T47D (cell line): ENCODE measurements at regions of chr6 and their contacts with region 1.

Region 1: DNA sequence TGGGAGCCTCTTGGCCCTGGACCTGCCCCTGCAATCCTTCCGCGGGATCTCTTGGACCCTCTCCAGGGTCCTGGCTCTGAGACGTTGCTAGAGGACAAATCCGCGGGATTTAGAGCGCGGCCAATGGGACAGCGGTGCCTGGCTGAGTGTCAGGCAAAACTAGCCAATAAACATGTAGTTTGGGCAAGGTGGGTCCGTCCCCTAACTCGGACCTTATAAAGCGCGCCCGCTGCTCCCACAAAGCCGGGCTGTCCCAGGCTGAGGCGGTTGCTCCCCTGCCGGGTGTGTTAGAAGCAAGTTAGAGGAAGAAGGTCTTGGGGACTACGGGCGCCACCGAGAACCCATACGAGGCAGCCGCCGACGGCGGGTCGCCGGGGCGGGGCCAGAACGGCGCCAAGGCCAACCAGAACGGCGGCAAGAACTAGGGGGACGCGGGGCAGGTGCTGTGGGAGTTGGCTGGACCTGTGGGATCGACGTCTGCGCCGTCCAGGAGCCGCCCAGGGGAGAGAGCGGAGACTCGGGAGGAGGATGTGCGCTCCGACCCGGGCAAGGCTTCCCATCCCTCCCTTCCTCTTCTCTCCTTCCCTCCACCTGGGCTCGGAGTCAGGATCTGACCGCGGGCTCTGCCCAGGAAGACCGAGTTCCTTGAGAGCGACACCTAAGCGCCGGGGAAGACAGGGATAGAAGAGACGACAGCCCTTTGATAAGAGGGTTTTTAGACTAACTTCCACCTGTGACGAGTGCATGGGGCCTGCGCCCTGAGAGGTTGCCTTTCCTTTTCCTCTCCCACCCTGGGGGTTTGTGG is 6.5 kb upstream of the TMEM14A start:
- DNase-seq: peak; percentile 97

Region 2: DNA sequence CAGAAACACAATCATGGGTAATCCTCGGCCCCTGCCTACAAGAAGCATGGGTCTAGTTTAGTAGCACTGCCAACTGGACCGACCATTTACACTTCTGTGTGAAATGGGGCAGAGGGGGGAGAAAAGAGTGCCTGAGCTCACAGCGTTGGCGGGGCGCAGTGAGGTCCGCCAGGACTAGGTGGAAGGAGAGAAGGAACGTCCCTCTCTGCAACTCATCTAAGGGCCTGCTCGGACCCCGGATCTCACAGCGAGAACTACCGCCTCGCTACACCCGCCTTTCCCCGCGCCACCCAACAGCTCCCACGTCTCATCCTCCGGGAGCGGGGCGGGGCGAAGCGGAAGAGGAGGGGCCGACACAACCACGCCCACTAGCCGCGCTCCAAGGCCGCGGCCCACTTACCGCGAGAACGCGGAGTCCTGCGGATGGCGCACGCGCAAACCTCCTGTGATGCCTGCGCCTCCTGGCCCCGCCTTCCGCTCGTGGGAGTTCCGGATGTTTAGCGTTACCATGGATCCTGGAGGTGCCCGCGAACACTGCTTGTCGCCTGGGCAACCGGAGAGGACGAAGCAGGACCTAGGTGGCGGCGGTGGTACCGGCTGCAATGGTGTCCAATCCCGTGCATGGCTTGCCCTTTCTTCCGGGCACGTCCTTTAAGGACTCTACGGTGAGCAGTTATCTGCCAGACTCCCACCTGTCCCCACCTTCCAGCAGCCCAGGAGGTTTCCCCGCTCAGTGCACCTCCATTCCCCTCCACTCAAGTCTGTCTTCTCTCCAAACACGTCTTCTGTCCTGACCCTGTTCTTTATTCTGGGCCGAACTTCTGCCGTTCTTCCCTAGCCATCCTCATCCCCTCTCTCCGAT is 244.3 kb before region 1 on chr6 and contains the start of gene EFHC1:
- in situ Hi-C with region 1: loop called (anchors 25 kb)
- DNase-seq: peak; percentile 67 to 98

Region 3: DNA sequence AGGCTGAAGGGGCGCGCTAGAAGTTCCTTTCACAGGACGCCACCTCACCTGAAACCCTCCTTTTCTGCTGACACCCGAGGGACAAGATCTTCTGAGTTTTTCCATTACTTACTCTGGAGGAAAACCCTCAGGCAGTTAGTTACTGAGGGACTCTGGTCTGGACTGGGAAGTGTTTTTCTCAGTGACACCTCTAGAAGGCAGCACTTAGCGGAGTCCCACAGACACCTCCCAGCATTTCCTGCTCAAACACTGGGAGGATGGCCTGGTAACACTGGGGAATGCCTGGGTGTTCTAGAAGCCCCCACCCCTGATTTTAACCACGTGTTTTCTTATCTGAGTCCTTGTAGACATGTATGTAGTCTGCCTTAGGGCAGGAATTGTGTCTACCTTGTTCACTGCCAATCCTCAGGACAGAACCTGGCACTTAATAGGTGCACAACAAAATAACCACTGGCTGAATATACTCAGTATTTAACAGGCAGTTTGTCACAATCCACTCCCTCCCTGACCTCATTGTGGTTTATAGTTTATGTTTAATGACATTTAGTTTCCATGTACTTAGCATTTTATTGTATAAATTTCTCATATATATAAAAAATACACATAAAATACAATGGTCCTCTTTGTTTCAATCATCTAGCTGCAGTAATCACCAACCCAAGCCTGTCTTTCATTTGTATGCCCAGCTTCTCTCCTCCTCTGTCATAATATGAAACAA is 240.3 kb after region 1 on chr6:
- in situ Hi-C with region 1: no loop called
- DNase-seq: no peak

Region 4: GRCh38 chr6:52925047-52925446 is 260.7 kb after region 1 on chr6:
- in situ Hi-C with region 1: no loop called
- DNase-seq: peak in 1 of 2 experiments; percentile 20